CD4-positive, alpha-beta T cell (primary cell): ENCODE measurements at regions of chr1 and their contacts with region 1.

Region 1: GRCh38 chr1:160584784-160585183 is 5.5 kb upstream of the CD84 start:
- DNase-seq: no peak
- ATAC-seq: no peak
- H3K4me3 ChIP-seq: no peak overlapping the region
- H3K4me3 Mint-ChIP-seq: peak overlapping the region; percentile 2
- H3K27ac ChIP-seq: no peak overlapping the region
- H3K27ac Mint-ChIP-seq: no peak overlapping the region
- H3K4me1 ChIP-seq: peaks cover 18% of the 10 kb centered on the region
- H3K4me1 Mint-ChIP-seq: peaks cover 64% of the 10 kb centered on the region
- H3K27me3 ChIP-seq: no peaks in the 10 kb centered on the region
- H3K27me3 Mint-ChIP-seq: no peaks in the 10 kb centered on the region
- CTCF ChIP-seq: no peak

Region 2: GRCh38 chr1:160494620-160495019 is 90.2 kb before region 1 on chr1:
- CTCF ChIA-PET with region 1: no interaction called
- POLR2A ChIA-PET with region 1: no interaction called
- intact Hi-C with region 1: no loop called
- DNase-seq: peak in 3 of 14 experiments; percentile 18 to 43 (median 30)
- ATAC-seq: no peak
- H3K4me3 ChIP-seq: no peak overlapping the region
- H3K4me3 Mint-ChIP-seq: no peak overlapping the region
- H3K27ac ChIP-seq: no peak overlapping the region
- H3K27ac Mint-ChIP-seq: no peak overlapping the region
- H3K4me1 ChIP-seq: no peaks in the 10 kb centered on the region
- H3K4me1 Mint-ChIP-seq: peaks cover 15% of the 10 kb centered on the region
- H3K27me3 ChIP-seq: no peaks in the 10 kb centered on the region
- H3K27me3 Mint-ChIP-seq: no peaks in the 10 kb centered on the region
- CTCF ChIP-seq: peak; percentile 11

Region 3: GRCh38 chr1:160550572-160551034 is 34.2 kb before region 1 on chr1:
- CTCF ChIA-PET with region 1: interaction called, 4 read pairs
- POLR2A ChIA-PET with region 1: interaction called, 3 read pairs
- intact Hi-C with region 1: loop called in 1 of 2 experiments (anchors 5 kb)
- DNase-seq: peak; percentile 34 to 78 (median 54)
- ATAC-seq: peak; percentile 71
- H3K4me3 ChIP-seq: no peak overlapping the region
- H3K4me3 Mint-ChIP-seq: no peak overlapping the region
- H3K27ac ChIP-seq: no peak overlapping the region
- H3K27ac Mint-ChIP-seq: peak overlapping the region; percentile 58
- H3K4me1 ChIP-seq: peaks cover 14% of the 10 kb centered on the region
- H3K4me1 Mint-ChIP-seq: peaks cover 33% of the 10 kb centered on the region
- H3K27me3 ChIP-seq: no peaks in the 10 kb centered on the region
- H3K27me3 Mint-ChIP-seq: no peaks in the 10 kb centered on the region
- CTCF ChIP-seq: peak; percentile 53